ENCODE measurements at regions of chr1 and their contacts with region 1.

Region 1: DNA sequence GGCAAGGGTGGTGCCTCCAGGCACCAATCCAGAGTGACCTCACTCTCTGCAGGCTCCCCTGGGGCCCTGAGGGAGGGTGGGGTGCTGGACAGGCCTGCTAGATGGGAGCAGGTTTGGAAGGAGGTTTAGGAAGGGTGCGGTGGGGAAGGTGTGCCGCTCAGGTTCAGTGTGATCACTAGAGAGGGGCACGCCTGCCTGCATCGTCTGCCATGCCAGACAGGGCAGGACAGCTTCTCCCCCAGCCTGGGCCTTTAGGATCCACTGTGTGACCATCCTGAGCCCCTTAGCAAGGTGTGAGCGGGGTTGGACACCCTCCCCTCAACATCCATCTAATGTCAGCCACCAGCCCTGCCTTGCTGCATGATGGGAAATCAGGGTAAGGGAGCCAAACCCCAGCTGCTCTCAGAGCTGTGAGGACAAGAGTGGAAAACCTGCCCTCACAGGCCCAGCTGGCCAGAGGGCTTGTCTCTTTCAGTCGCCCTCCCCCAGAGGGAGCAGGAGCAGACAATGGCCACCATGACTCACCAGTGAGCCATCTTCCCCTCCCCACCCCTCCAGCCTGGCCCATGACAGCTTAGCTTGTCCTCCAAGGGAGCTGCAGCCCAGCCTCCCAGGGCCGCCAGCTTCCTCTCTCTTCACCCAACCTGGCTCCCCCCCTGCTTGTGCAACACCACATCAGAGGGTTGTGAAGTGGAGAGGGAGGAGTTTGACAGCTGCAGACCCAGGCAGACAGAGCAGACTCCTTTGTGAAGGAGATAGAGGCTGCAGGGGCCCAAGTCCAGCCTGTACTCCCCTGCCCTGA is 37.0 kb downstream of the NUAK2 start:
- DNase-seq: peak; percentile 100
- H3K4me3 Mint-ChIP-seq: peak overlapping the region; percentile 24
- H3K27ac Mint-ChIP-seq: peak overlapping the region; percentile 96
- H3K4me1 Mint-ChIP-seq: peaks cover 75% of the 10 kb centered on the region
- H3K27me3 Mint-ChIP-seq: no peaks in the 10 kb centered on the region
- CTCF ChIP-seq: no peak

Region 2: GRCh38 chr1:205162301-205162700 is 122.2 kb before region 1 on chr1:
- CTCF ChIA-PET with region 1: no interaction called
- POLR2A ChIA-PET with region 1: no interaction called
- intact Hi-C with region 1: no loop called
- DNase-seq: no peak
- H3K4me3 Mint-ChIP-seq: no peak overlapping the region
- H3K27ac Mint-ChIP-seq: no peak overlapping the region
- H3K4me1 Mint-ChIP-seq: no peaks in the 10 kb centered on the region
- H3K27me3 Mint-ChIP-seq: no peaks in the 10 kb centered on the region
- CTCF ChIP-seq: no peak

Region 3: GRCh38 chr1:205300886-205301821 is 16.6 kb after region 1 on chr1:
- CTCF ChIA-PET with region 1: interaction called, 5 read pairs
- POLR2A ChIA-PET with region 1: interaction called, 201 read pairs
- intact Hi-C with region 1: loop called (anchors 1 kb)
- DNase-seq: peak; percentile 91
- H3K4me3 Mint-ChIP-seq: no peak overlapping the region
- H3K27ac Mint-ChIP-seq: peak overlapping the region; percentile 23
- H3K4me1 Mint-ChIP-seq: peaks cover 48% of the 10 kb centered on the region
- H3K27me3 Mint-ChIP-seq: no peaks in the 10 kb centered on the region
- CTCF ChIP-seq: no peak